Heart right ventricle (tissue), 16 donors: ENCODE measurements at regions of chr12 and their contacts with region 1.

Region 1: GRCh38 chr12:62703011-62703380 is 232.0 kb downstream of the PPM1H start:
- DNase-seq: no peak
- ATAC-seq: peak in 6 of 8 donors; percentile 2 to 53 (median 34)
- H3K4me3 ChIP-seq: no peak overlapping the region
- H3K27ac ChIP-seq: peak overlapping the region in 9 of 10 donors; percentile 42 to 87 (median 72)
- H3K4me1 ChIP-seq: peaks cover 9 to 57% (median 33%) of the 10 kb centered on the region in 9 donors
- H3K27me3 ChIP-seq: no peaks in the 10 kb centered on the region
- CTCF ChIP-seq: no peak

Region 2: DNA sequence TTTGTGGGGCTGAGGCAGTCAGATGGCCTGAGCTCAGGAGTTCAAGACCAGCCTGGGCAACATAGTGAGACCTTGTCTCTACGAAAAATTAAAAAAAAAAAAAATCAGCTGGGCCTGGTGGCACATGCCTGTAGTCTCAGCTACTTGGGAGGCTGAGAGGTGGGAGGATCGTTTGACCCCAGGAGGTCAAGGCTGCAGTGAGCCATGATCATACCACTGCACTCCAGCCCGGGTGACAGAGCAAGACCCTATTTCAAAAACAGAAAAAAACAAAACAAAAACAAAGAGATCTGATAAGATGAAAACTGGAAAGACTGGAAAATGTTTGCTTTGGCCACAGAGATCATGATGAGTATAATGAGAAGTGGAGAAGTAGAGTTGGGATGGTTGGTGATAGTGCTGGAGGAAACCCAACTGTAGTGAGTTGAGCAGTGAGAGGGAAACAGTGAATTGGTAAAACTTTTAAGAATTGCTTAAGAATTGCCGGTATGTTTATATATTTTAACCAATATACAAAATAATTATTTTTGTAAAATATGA is 197.3 kb before region 1 on chr12:
- intact Hi-C with region 1: no loop called
- DNase-seq: no peak
- ATAC-seq: no peak
- H3K4me3 ChIP-seq: no peak overlapping the region
- H3K27ac ChIP-seq: no peak overlapping the region
- H3K4me1 ChIP-seq: peaks cover 0 to 10% (median 0%) of the 10 kb centered on the region in 9 donors
- H3K27me3 ChIP-seq: no peaks in the 10 kb centered on the region
- CTCF ChIP-seq: no peak

Region 3: DNA sequence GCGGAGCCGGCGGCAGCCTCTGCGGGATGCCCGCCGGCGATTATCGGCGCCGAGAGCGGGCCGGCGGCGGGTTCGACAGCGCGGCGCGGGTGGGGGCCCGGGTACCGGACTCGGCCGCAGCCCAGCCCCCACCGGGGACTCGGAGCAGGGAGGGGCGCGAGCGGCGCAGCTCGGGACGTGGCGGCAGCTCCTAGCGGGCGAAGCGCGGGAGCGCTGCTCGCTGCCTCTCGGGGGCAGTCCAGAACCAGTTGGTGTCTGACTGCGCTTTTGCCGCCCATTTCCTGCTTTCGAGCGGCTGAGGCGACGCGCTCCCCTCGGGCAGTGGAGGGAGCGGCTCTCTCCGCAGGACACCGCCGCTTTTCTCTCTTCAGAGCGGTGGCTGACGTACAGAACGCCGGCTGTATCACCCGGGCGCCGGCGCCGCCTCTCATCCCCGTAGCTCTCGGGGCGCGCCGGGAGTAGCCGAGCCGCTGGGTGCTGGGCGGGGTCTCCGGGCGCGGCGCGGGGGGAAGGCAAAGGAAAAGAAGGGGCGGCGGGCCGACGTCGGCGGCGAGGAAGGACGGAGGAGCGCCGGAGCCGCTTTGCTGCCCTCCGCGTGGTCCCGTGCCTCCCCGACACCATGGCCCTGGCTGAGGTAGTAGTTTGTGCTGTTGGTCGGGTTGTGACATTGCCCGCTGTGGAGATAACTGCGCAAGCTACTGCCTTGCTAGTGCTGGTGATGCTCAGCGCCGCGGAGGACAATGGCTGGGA is 99.8 kb before region 1 on chr12:
- intact Hi-C with region 1: loop called in 1 of 10 experiments (anchors 5 kb)
- DNase-seq: peak; percentile 86 to 87
- ATAC-seq: peak; percentile 90 to 98 (median 93)
- H3K4me3 ChIP-seq: peak overlapping the region; percentile 55 to 97 (median 80)
- H3K27ac ChIP-seq: peak overlapping the region; percentile 99 to 100 (median 100)
- H3K4me1 ChIP-seq: peaks cover 0 to 45% (median 20%) of the 10 kb centered on the region in 9 donors
- H3K27me3 ChIP-seq: no peaks in the 10 kb centered on the region
- CTCF ChIP-seq: peak; percentile 29 to 79 (median 52)

Region 4: GRCh38 chr12:62660756-62661155 is 42.2 kb before region 1 on chr12:
- intact Hi-C with region 1: no loop called
- DNase-seq: no peak
- ATAC-seq: no peak
- H3K4me3 ChIP-seq: no peak overlapping the region
- H3K27ac ChIP-seq: no peak overlapping the region
- H3K4me1 ChIP-seq: peaks cover 0 to 8% (median 0%) of the 10 kb centered on the region in 9 donors
- H3K27me3 ChIP-seq: no peaks in the 10 kb centered on the region
- CTCF ChIP-seq: no peak

Region 5: GRCh38 chr12:62760779-62761178 is 57.8 kb after region 1 on chr12:
- intact Hi-C with region 1: loop called in 1 of 10 experiments (anchors 10 kb)
- DNase-seq: no peak
- ATAC-seq: peak in 3 of 8 donors; percentile 30 to 32 (median 30)
- H3K4me3 ChIP-seq: no peak overlapping the region
- H3K27ac ChIP-seq: peak overlapping the region in 3 of 10 donors; percentile 2 to 33 (median 29)
- H3K4me1 ChIP-seq: peaks cover 0 to 44% (median 22%) of the 10 kb centered on the region in 9 donors
- H3K27me3 ChIP-seq: no peaks in the 10 kb centered on the region
- CTCF ChIP-seq: no peak

Region 6: GRCh38 chr12:62785941-62786559 is 83.1 kb after region 1 on chr12:
- intact Hi-C with region 1: loop called in 1 of 10 experiments (anchors 2 kb)
- DNase-seq: peak; percentile 27 to 77
- ATAC-seq: peak; percentile 68 to 93 (median 90)
- H3K4me3 ChIP-seq: no peak overlapping the region
- H3K27ac ChIP-seq: peak overlapping the region; percentile 59 to 94 (median 84)
- H3K4me1 ChIP-seq: peaks cover 0 to 68% (median 45%) of the 10 kb centered on the region in 9 donors
- H3K27me3 ChIP-seq: no peaks in the 10 kb centered on the region
- CTCF ChIP-seq: no peak

Region 7: DNA sequence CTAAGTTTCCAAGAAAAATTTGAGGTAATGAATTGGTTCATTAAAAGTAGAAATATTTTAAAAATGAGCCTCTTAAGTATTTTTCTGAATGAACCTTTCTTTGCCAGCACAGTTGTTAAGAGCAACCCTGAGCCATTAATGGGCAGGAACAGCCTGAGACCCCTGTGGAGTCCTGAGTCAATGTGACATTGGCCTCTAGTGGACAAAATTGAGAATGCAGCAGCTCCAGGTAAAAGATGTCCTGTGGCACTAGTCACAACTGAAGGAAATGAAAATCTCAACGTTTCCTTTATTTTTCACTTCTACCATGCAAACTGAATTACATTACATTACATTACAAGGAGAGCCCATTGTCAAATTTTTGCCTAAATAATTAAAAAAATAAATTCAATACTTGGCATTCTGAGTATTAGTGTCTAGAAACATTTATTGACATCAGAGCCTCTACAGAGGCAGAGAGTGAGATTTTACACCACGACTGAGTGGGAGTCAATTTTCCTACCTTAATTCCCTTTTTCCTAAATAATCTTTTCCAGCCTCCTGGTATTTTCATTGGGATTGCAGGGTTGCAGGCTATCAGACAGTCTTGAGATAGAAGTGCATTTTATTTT is 96.2 kb after region 1 on chr12:
- intact Hi-C with region 1: no loop called
- DNase-seq: peak in 1 of 2 donors; percentile 72
- ATAC-seq: peak in 7 of 8 donors; percentile 75 to 84 (median 80)
- H3K4me3 ChIP-seq: no peak overlapping the region
- H3K27ac ChIP-seq: no peak overlapping the region
- H3K4me1 ChIP-seq: peaks cover 0 to 6% (median 0%) of the 10 kb centered on the region in 9 donors
- H3K27me3 ChIP-seq: no peaks in the 10 kb centered on the region
- CTCF ChIP-seq: peak; percentile 86 to 97 (median 94)